HAP-1 (cell line): ENCODE measurements at regions of chrX and their contacts with region 1.

Region 1: GRCh38 chrX:41027431-41027831 is 57.8 kb upstream of the USP9X start:
- DNase-seq: peak; percentile 73 to 97
- H3K4me3 ChIP-seq: no peak overlapping the region
- H3K4me1 ChIP-seq: peaks cover 23% of the 10 kb centered on the region
- H3K27me3 ChIP-seq: no peaks in the 10 kb centered on the region

Region 2: DNA sequence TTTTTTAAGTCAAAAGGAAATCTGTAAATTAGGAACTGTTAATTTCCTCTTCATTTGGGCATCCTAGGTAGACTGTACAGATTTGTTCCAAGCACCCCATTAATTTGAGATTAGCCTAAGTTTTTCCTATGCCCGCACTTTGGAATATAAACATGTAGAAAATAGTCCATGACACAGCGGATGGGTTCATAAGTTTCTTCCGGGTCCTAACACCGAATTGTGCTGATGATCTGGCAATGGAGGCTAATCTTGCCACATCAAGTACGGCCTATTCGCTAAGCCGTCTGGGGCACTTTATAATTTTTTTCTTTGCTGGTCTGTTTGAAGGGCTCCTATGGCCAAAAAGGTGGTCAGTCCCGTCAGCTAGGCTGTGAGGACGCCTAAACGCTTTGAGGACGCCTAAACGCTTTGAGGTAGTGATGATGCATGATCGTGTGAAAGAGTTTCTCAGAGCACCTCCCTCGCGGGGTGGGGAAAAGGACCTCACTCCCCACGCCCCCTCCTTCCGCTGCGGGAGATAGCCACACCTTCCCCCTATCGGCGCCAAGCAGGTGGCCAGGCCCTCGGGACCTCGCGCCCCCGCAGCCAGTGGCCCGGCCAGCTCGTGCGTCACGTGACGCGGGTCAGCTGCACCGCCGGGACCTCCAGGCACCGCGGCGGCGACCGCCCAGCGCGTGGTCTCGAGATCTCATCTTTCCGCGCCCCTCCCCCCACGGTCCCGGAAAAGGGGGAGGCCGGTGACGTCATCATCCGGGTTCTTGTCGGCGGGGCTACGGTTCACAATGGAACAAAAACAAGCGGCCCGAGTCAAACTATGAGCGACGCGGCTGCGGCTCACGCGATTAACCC is 56.8 kb after region 1 on chrX:
- in situ Hi-C with region 1: loop called (anchors 10 kb)
- DNase-seq: peak; percentile 98 to 100
- H3K4me3 ChIP-seq: peak overlapping the region; percentile 92
- H3K4me1 ChIP-seq: peaks cover 5% of the 10 kb centered on the region
- H3K27me3 ChIP-seq: no peaks in the 10 kb centered on the region